ENCODE measurements at regions of chr1 and their contacts with region 1.

Region 1: DNA sequence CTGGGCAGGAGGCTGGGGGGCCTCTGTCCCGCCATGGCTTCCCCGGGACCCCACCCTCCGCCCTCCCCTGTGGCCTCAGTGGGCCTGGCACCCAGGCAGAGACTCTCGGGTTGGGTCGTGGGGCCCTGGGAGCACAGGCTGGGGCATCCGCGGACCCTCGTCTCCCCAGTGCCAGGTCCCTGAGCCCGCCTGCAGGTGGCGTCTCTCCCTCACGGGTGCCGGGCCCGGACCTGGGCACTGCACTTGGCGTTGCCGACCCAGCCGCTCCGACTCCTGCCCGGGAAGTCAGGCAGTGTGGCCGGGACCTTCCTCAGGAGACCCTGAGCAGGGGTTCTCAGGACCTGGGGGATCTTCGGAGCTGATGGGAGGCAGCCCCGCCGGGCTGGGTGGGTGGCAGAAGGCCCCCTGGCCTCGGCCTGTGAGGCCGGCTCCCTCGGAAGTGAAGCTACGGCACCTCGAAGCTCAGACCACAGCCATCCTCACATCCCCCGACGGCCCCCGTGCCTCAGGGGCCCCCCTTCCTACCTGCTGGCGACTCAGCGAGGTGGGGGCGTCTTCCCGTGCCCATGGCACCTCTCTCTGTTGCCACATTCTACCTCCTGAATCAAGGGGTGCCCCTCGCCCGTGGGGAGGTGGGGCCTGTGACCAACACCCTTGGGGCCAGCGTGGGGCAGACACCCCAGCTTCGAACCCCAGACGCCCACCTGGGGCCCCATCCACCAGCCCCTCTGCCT is 6.4 kb upstream of the C1orf159 start:
- DNase-seq: peak; percentile 89 to 93 (median 89)
- ATAC-seq: peak; percentile 68
- H3K4me3 ChIP-seq: no peak overlapping the region
- H3K4me1 ChIP-seq: peaks cover 47% of the 10 kb centered on the region
- CTCF ChIP-seq: peak; percentile 77

Region 2: GRCh38 chr1:1250786-1251284 is 128.6 kb after region 1 on chr1:
- intact Hi-C with region 1: loop called in 1 of 2 experiments (anchors 10 kb)
- DNase-seq: peak in 2 of 3 donors; percentile 42 to 76
- ATAC-seq: peak; percentile 70
- H3K4me3 ChIP-seq: no peak overlapping the region
- H3K4me1 ChIP-seq: peaks cover 6% of the 10 kb centered on the region
- CTCF ChIP-seq: no peak

Region 3: GRCh38 chr1:1299686-1300362 is 177.6 kb after region 1 on chr1:
- intact Hi-C with region 1: loop called in 1 of 2 experiments (anchors 5 kb)
- DNase-seq: no peak
- ATAC-seq: peak; percentile 13
- H3K4me3 ChIP-seq: no peak overlapping the region
- H3K4me1 ChIP-seq: peaks cover 4% of the 10 kb centered on the region
- CTCF ChIP-seq: no peak

Measured in mucosa of descending colon (tissue), 3 donors.